Heart right ventricle (tissue), 16 donors: ENCODE measurements at regions of chr3 and their contacts with region 1.

Region 1: DNA sequence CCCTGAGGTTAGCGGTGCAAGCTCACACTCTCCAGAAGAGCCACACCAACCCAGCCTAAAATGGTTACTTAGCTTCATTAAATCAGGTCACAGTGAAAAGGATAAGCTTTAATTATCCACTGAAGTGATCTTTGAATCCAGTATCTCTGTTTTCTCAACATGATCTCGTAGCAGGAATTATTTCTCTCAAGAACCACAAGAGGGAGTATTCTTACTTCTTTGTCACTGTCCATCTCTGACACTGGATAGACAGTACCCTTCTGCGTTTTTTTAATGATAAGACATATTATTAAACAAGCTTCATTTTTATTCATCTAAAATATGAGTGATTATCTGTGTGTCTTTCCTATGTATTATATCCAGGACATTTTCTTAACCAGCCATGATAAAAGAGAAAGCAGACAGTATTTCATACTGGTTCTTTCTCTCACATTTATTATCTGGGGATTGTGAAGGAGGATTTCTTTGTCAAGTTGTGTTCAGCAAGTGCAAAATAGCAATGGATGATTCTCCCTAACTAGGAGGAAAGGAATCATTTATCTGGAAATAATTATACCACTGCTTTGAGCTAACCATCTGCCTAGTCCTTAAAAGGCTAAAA is 105.4 kb upstream of the CCDC54 start:
- DNase-seq: no peak
- ATAC-seq: peak in 4 of 8 donors; percentile 55 to 75 (median 72)
- H3K4me3 ChIP-seq: no peak overlapping the region
- H3K27ac ChIP-seq: no peak overlapping the region
- H3K4me1 ChIP-seq: no peaks in the 10 kb centered on the region
- H3K27me3 ChIP-seq: no peaks in the 10 kb centered on the region
- CTCF ChIP-seq: peak; percentile 24 to 76 (median 68)

Region 2: GRCh38 chr3:107216711-107217110 is 55.2 kb before region 1 on chr3:
- intact Hi-C with region 1: no loop called
- DNase-seq: peak; percentile 24 to 39
- ATAC-seq: peak in 7 of 8 donors; percentile 46 to 91 (median 79)
- H3K4me3 ChIP-seq: no peak overlapping the region
- H3K27ac ChIP-seq: peak overlapping the region in 3 of 10 donors; percentile 18 to 45 (median 37)
- H3K4me1 ChIP-seq: peaks cover 0 to 36% (median 15%) of the 10 kb centered on the region in 9 donors
- H3K27me3 ChIP-seq: no peaks in the 10 kb centered on the region
- CTCF ChIP-seq: no peak

Region 3: GRCh38 chr3:107247110-107247509 is 24.8 kb before region 1 on chr3:
- intact Hi-C with region 1: loop called in 1 of 10 experiments (anchors 2 kb)
- DNase-seq: no peak
- ATAC-seq: no peak
- H3K4me3 ChIP-seq: no peak overlapping the region
- H3K27ac ChIP-seq: no peak overlapping the region
- H3K4me1 ChIP-seq: peaks cover 0 to 17% (median 6%) of the 10 kb centered on the region in 9 donors
- H3K27me3 ChIP-seq: no peaks in the 10 kb centered on the region
- CTCF ChIP-seq: no peak

Region 4: DNA sequence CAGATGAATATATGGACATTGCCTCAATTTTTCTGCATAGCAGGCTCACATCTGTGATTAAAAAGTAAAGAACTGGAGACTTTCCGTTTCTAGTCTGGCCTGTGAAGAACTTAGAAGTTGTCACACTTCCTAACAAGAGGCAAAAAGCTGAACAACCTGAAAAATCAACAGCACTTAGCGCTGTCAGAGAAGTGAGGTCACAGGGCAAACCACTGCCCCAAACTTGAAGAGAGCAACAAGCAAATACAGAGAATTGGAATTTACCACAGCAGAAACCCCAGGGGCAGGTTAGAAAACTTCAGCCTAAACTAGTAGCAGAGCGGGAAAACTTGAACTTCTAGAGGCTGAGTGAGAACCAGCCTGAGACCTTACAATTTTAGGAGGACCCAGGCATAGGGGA is 144.3 kb after region 1 on chr3:
- intact Hi-C with region 1: loop called in 4 of 10 experiments (anchors 1 to 10 kb)
- DNase-seq: no peak
- ATAC-seq: no peak
- H3K4me3 ChIP-seq: no peak overlapping the region
- H3K27ac ChIP-seq: no peak overlapping the region
- H3K4me1 ChIP-seq: peaks cover 0 to 9% (median 2%) of the 10 kb centered on the region in 9 donors
- H3K27me3 ChIP-seq: no peaks in the 10 kb centered on the region
- CTCF ChIP-seq: no peak

Region 5: GRCh38 chr3:107421170-107421792 is 149.4 kb after region 1 on chr3:
- intact Hi-C with region 1: loop called in 7 of 10 experiments (anchors 1 to 10 kb)
- DNase-seq: no peak
- ATAC-seq: peak in 7 of 8 donors; percentile 39 to 82 (median 75)
- H3K4me3 ChIP-seq: peak overlapping the region in 9 of 10 donors; percentile 0 to 55 (median 44)
- H3K27ac ChIP-seq: peak overlapping the region in 3 of 10 donors; percentile 11 to 39 (median 29)
- H3K4me1 ChIP-seq: peaks cover 0 to 5% (median 0%) of the 10 kb centered on the region in 9 donors
- H3K27me3 ChIP-seq: no peaks in the 10 kb centered on the region
- CTCF ChIP-seq: peak; percentile 42 to 84 (median 75)

Region 6: GRCh38 chr3:107429320-107430181 is 157.7 kb after region 1 on chr3:
- intact Hi-C with region 1: loop called in 7 of 10 experiments (anchors 2 to 10 kb)
- DNase-seq: peak; percentile 67 to 77
- ATAC-seq: peak; percentile 72 to 92 (median 88)
- H3K4me3 ChIP-seq: peak overlapping the region; percentile 23 to 95 (median 85)
- H3K27ac ChIP-seq: peak overlapping the region; percentile 3 to 99 (median 96)
- H3K4me1 ChIP-seq: peaks cover 0 to 28% (median 16%) of the 10 kb centered on the region in 9 donors
- H3K27me3 ChIP-seq: peaks cover 0 to 15% (median 0%) of the 10 kb centered on the region in 7 donors
- CTCF ChIP-seq: peak; percentile 79 to 94 (median 91)

Region 7: DNA sequence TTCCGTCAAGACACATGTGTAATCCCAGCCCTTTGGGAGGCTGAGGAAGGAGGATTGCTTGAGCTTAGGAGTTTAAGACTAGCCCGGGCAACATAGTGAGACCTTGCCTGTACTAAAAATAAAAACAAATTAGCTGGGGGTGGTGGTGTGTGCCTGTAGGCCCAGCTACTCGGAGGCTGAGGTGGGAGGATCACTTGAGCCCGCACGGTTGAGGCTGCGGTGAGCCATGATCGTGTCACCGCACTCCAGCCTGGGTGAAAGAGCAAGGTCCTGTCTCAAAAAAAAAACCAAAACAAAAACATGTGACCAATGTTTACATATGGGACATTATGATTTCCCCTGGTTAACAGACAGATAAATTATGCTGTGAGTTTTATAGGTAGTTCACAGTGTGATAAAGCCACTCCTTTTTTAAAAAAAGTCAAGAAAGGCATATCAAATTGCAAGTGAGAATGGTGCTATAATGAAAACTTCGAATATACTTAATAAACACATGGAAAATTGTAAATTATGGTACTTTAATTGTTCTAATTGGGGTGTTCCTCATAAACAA is 260.1 kb after region 1 on chr3:
- intact Hi-C with region 1: loop called in 1 of 10 experiments (anchors 10 kb)
- DNase-seq: no peak
- ATAC-seq: no peak
- H3K4me3 ChIP-seq: no peak overlapping the region
- H3K27ac ChIP-seq: no peak overlapping the region
- H3K4me1 ChIP-seq: peaks cover 0 to 6% (median 0%) of the 10 kb centered on the region in 9 donors
- H3K27me3 ChIP-seq: no peaks in the 10 kb centered on the region
- CTCF ChIP-seq: no peak

Region 8: DNA sequence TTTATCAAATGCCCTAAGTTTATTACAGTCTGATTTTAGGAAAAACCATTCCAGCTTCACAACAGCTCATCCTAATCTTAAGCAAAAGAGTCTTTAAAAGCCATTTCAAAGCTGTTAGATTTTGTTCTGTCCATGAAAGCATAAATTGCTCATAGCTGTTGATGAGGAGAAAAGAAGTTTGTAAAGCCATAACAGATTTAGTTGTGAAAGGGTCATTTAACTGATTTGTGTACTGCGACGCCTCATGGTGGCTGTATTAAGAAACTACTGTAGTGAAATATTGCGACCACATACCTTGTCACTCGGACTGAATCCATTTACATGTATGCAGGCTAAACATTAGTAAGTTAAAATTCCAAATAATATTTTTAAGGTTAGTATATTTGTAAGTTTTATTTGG is 271.8 kb after region 1 on chr3:
- intact Hi-C with region 1: loop called in 4 of 10 experiments (anchors 5 to 10 kb)
- DNase-seq: no peak
- ATAC-seq: no peak
- H3K4me3 ChIP-seq: no peak overlapping the region
- H3K27ac ChIP-seq: no peak overlapping the region
- H3K4me1 ChIP-seq: no peaks in the 10 kb centered on the region
- H3K27me3 ChIP-seq: no peaks in the 10 kb centered on the region
- CTCF ChIP-seq: peak in 6 of 9 donors; percentile 28 to 50 (median 30)

Region 9: DNA sequence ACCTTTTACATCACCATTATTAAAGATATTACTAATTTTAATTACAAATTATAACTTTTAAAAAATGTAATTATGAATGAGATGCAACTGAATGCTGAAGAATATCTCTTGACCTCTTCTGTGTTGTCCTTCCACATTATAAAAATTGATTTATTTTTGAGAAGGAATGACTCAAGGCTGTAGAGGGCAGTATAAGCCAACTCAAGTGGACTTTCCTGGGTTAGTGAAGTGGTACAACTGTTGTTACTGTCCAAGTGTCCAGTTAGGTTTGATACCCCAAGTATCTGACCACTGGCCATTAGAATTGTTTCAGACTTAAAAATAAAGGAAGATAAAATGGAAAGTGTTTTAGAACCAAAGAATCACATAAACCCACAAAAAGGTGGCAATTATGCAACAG is 302.8 kb after region 1 on chr3:
- intact Hi-C with region 1: no loop called
- DNase-seq: peak in 1 of 2 donors; percentile 32
- ATAC-seq: peak in 6 of 8 donors; percentile 51 to 79 (median 70)
- H3K4me3 ChIP-seq: no peak overlapping the region
- H3K27ac ChIP-seq: no peak overlapping the region
- H3K4me1 ChIP-seq: peaks cover 0 to 14% (median 4%) of the 10 kb centered on the region in 9 donors
- H3K27me3 ChIP-seq: no peaks in the 10 kb centered on the region
- CTCF ChIP-seq: peak; percentile 37 to 77 (median 66)